ENCODE measurements at regions of chr5 and their contacts with region 1.

Region 1: GRCh38 chr5:178075840-178076548 is 37.3 kb upstream of the N4BP3 start:
- H3K4me3 ChIP-seq: peak overlapping the region; percentile 24
- H3K27ac ChIP-seq: no peak overlapping the region
- H3K4me1 ChIP-seq: no peaks in the 10 kb centered on the region
- CTCF ChIP-seq: peak; percentile 87

Region 2: DNA sequence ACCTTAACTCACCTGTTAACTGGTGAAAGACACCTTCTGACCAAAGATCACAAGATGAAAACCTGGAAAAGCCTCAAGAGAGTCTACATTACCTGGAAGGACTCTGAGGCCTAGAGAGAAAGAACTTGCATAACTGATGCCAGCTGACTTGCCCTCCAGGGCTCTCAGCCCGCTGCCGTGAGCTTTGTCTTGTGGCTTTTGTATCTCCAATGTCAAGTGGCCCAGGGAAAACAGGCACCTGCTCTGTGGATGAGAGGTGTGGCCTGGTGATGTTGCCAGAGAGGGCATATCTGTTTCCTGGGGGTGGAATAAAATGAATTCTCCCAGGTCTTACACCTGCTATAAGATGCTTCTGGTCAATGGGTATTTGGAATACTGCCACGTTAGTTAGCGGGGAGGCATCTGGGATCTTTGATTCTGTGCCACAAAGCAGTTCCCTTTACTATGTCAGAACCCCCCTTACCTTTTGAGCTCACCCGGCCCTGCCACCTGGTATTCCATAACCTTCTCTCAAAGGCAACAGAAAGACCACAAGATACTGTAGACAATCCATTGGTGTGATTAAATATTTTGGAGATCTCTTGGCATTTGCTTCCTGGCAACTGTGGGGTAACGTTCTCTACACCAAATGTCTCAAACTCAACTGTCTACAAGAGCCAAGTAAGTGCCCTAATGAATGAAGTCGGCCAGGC is 17.5 kb before region 1 on chr5:
- CTCF ChIA-PET with region 1: interaction called, 16 read pairs
- POLR2A ChIA-PET with region 1: no interaction called
- H3K4me3 ChIP-seq: no peak overlapping the region
- H3K27ac ChIP-seq: no peak overlapping the region
- H3K4me1 ChIP-seq: no peaks in the 10 kb centered on the region
- CTCF ChIP-seq: no peak

Region 3: DNA sequence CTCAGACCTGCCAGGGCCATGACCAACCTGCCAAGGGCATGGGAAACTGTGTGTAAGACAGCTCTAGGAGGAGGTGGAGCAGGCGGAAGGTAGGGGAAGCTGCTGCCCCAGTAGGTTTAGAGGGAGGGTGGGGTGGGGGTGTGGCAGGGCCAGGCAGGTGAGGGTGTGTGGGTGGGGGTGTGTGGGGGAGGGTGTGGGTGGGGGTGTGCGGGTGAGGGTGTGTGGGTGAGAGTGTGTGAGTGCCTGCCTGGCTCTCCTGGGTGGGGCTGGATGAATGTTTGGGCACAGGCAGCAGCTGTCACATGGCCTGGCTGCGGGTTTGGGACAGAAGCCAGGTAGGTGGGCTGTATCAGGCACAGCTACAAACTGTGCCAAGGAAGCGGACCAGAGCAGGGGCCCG is 28.5 kb after region 1 on chr5:
- CTCF ChIA-PET with region 1: interaction called, 12 read pairs
- POLR2A ChIA-PET with region 1: no interaction called
- H3K4me3 ChIP-seq: no peak overlapping the region
- H3K27ac ChIP-seq: no peak overlapping the region
- H3K4me1 ChIP-seq: no peaks in the 10 kb centered on the region
- CTCF ChIP-seq: no peak

Region 4: GRCh38 chr5:178130604-178131485 is 54.9 kb after region 1 on chr5 and contains the start of gene RMND5B:
- CTCF ChIA-PET with region 1: interaction called, 25 read pairs
- POLR2A ChIA-PET with region 1: interaction called, 4 read pairs
- H3K4me3 ChIP-seq: peak within 1 kb of the TSS; percentile 91
- H3K27ac ChIP-seq: peak within 1 kb of the TSS; percentile 93
- H3K4me1 ChIP-seq: no peaks in the 10 kb centered on the region
- CTCF ChIP-seq: no peak

Region 5: GRCh38 chr5:178153573-178154343 is 77.8 kb after region 1 on chr5 and contains the start of gene NHP2:
- CTCF ChIA-PET with region 1: interaction called, 204 read pairs
- POLR2A ChIA-PET with region 1: interaction called, 13 read pairs
- H3K4me3 ChIP-seq: peak within 1 kb of the TSS; percentile 90
- H3K27ac ChIP-seq: peak within 1 kb of the TSS; percentile 13; the same call in 1 of the 2 replicates
- H3K4me1 ChIP-seq: peaks cover 4% of the 10 kb centered on the region; the same call in 1 of the 2 replicates
- CTCF ChIP-seq: no peak

Region 6: DNA sequence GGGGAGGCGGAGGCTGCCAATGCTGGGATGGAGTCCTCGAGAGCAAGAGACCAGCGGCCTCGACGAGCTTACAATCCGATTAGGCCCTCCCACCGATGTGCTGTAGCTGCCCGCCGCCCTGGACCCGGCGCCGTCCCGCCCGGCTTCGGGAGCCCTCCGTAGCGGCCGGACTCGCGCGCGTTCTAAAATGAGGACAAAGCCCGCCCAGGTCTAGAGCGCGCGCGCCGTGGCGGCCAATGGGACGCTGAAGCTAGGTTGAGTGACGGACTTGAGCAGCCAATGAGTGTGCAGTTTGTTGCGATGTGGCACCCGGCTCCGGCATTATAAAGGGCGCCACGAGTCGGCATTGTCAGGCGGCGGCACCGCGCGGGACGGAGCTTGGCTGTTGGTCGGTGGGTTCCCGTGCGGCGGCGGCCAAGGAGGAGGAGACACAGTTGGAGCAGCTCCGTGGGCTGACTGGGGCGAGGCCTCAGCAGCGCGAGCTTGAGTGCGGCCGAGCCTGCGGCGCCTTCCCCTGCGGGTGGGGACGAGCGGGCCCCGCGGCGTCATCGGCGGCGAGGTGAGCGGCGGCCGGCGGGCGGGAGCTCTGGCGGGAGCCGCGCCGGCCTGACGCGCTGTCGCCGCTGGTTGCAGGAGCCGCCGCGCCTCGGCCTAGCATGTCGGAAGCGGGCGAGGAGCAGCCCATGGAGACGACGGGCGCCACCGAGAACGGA is 128.3 kb after region 1 on chr5 and contains the start of gene HNRNPAB:
- CTCF ChIA-PET with region 1: interaction called, 5 read pairs
- POLR2A ChIA-PET with region 1: interaction called, 12 read pairs
- H3K4me3 ChIP-seq: peak within 1 kb of the TSS; percentile 68
- H3K27ac ChIP-seq: peak within 1 kb of the TSS; percentile 98
- H3K4me1 ChIP-seq: peaks cover 6% of the 10 kb centered on the region; the same call in 1 of the 2 replicates
- CTCF ChIP-seq: no peak

Region 7: GRCh38 chr5:178331399-178331996 is 255.5 kb after region 1 on chr5:
- CTCF ChIA-PET with region 1: no interaction called
- POLR2A ChIA-PET with region 1: no interaction called
- H3K4me3 ChIP-seq: no peak overlapping the region
- H3K27ac ChIP-seq: no peak overlapping the region
- H3K4me1 ChIP-seq: no peaks in the 10 kb centered on the region; the same call in 1 of the 2 replicates
- CTCF ChIP-seq: no peak

Region 8: GRCh38 chr5:178413988-178414387 is 338.0 kb after region 1 on chr5:
- CTCF ChIA-PET with region 1: no interaction called
- POLR2A ChIA-PET with region 1: no interaction called
- H3K4me3 ChIP-seq: no peak overlapping the region
- H3K27ac ChIP-seq: no peak overlapping the region
- H3K4me1 ChIP-seq: no peaks in the 10 kb centered on the region
- CTCF ChIP-seq: no peak